Left colon (tissue), 2 donors: ENCODE measurements at regions of chr2 and their contacts with region 1.

Region 1: GRCh38 chr2:219160186-219161017 is at the start of gene NHEJ1:
- DNase-seq: peak; percentile 98 to 99
- ATAC-seq: peak; percentile 96
- total RNA-seq, gene NHEJ1: 45.4 to 56.1 TPM

Region 2: DNA sequence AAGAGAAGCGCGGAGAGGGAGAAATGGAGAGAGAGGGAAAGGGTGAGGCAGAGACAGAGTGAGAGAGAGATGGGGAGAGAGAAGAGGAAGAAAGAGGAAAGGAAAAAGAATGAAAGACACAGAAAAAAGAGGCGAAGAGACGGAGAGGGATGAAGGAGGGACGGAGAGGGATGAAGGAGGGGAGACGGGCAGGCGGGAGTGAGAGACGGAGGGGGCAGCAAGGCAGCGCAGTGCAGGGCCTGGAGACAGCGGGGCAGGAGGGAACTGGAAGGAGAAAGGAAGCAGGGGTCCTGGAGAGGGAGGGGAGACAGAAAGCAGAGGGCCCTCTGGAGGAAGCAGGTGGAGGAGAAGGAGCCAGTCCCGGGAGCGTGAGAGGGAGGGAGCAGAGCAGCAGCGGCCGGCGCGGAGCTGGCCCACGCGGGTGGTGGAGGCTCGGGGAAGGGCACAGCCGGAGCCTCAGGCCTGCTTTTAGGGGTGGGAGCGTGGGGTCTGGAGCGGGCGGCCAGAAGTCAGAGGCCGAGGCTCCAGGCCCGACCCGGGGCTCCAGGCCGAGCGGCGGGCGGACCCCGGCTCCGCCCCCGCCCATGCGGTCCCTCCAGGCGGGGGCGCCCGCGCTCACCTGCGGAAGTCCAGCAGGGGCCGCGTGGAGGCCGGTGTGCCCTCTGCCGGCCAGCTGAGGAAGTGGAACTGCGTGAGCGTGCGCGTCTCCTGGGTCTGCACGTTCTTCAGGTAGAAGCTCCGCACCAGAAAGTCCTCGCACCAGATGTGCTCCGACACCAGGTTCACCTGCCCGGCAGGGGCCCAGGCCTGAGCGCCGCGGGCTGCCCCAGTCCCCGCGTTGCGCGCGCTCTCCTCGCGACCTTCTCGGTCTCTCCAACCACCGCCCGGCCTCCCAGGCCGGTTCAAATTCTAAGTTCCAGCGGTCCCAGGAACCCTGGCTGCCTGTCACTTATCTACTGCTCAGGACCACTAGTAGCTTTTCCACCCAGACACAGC is 134.3 kb after region 1 on chr2:
- intact Hi-C with region 1: loop called (anchors 2 to 10 kb)
- DNase-seq: peak; percentile 75 to 92
- ATAC-seq: peak; percentile 91